K562 (cell line): ENCODE measurements at regions of chr16 and their contacts with region 1.

Region 1: GRCh38 chr16:25257504-25257955 is at the start of gene ZKSCAN2:
- DNase-seq: peak; percentile 93 to 94 (median 94)
- ATAC-seq: peak; percentile 94
- H3K4me3 ChIP-seq: peak within 1 kb of the TSS; percentile 59
- H3K27ac ChIP-seq: peak within 1 kb of the TSS; percentile 98
- H3K4me1 ChIP-seq: peaks cover 7 to 19% of the 10 kb centered on the region in 2 experiments; a peak in 4 of 5 replicates
- H3K27me3 ChIP-seq: no peaks in the 10 kb centered on the region
- CTCF ChIP-seq: no peak
- EP300 ChIP-seq: 0 out of 2 replicates have a peak, but pooled peaks have one; percentile 10
- POLR2A ChIP-seq: peak; percentile 98
- RAD21 ChIP-seq: no peak
- polyA plus RNA-seq, gene ZKSCAN2: 1.3 to 1.9 TPM

Region 2: DNA sequence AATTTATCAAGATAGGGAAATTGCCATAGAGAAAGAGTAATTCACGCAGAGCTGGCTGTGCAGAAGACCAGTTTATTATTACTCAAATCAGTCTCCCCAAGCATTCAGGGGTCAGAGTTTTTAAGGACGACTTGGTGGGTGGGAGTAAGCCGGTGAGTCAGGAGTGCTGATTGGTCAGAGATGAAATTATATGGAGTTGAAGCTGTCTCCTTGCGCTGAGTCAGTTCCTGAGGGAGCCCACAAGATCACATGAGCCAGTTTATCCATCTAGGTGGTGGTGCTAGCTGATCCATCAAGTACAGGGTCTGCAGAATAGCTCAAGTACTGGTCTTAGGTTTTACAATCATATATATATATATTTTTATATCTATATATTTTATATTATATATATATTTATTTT is 46.8 kb before region 1 on chr16:
- CTCF ChIA-PET with region 1: no interaction called
- POLR2A ChIA-PET with region 1: no interaction called
- in situ Hi-C with region 1: no loop called
- intact Hi-C with region 1: no loop called
- DNase-seq: peak; percentile 52 to 83 (median 60)
- ATAC-seq: peak; percentile 89
- H3K4me3 ChIP-seq: no peak overlapping the region
- H3K27ac ChIP-seq: no peak overlapping the region
- H3K4me1 ChIP-seq: peaks cover 0 to 10% of the 10 kb centered on the region in 2 experiments; a peak in 3 of 5 replicates
- H3K27me3 ChIP-seq: no peaks in the 10 kb centered on the region
- CTCF ChIP-seq: no peak
- EP300 ChIP-seq: no peak
- POLR2A ChIP-seq: no peak
- RAD21 ChIP-seq: no peak

Region 3: DNA sequence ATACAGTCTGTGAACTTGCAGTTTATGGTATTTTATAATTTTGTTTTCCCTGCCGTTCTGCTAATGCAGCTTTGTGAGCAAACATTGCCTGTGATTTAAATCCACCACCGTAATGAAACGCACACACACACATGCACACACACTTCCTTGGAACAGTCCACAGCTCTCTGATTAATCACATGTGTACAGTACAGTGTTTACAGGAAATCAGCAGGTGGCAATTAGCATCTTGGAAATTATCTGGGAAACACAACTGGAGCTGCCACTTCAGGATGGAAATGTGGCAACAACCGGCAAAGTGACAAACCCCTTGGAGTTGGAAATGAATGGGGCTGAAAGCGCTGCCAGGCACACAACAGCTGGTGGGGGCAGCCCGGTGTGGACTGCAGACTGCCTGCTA is 13.0 kb after region 1 on chr16:
- CTCF ChIA-PET with region 1: no interaction called
- POLR2A ChIA-PET with region 1: interaction called, 40 read pairs
- in situ Hi-C with region 1: no loop called
- intact Hi-C with region 1: no loop called
- DNase-seq: no peak
- ATAC-seq: no peak
- H3K4me3 ChIP-seq: no peak overlapping the region
- H3K27ac ChIP-seq: no peak overlapping the region
- H3K4me1 ChIP-seq: peaks cover 13 to 17% of the 10 kb centered on the region in 2 experiments; a peak in 4 of 5 replicates
- H3K27me3 ChIP-seq: no peaks in the 10 kb centered on the region
- CTCF ChIP-seq: no peak
- EP300 ChIP-seq: no peak
- POLR2A ChIP-seq: no peak
- RAD21 ChIP-seq: no peak